ENCODE measurements at regions of chr2 and their contacts with region 1.

Region 1: GRCh38 chr2:218733171-218734021 is 22.8 kb downstream of the TTLL4 start:
- DNase-seq: peak; percentile 16
- H3K4me3 Mint-ChIP-seq: no peak overlapping the region
- H3K27ac Mint-ChIP-seq: peak overlapping the region; percentile 48
- H3K4me1 Mint-ChIP-seq: peaks cover 28% of the 10 kb centered on the region
- H3K27me3 Mint-ChIP-seq: no peaks in the 10 kb centered on the region

Region 2: DNA sequence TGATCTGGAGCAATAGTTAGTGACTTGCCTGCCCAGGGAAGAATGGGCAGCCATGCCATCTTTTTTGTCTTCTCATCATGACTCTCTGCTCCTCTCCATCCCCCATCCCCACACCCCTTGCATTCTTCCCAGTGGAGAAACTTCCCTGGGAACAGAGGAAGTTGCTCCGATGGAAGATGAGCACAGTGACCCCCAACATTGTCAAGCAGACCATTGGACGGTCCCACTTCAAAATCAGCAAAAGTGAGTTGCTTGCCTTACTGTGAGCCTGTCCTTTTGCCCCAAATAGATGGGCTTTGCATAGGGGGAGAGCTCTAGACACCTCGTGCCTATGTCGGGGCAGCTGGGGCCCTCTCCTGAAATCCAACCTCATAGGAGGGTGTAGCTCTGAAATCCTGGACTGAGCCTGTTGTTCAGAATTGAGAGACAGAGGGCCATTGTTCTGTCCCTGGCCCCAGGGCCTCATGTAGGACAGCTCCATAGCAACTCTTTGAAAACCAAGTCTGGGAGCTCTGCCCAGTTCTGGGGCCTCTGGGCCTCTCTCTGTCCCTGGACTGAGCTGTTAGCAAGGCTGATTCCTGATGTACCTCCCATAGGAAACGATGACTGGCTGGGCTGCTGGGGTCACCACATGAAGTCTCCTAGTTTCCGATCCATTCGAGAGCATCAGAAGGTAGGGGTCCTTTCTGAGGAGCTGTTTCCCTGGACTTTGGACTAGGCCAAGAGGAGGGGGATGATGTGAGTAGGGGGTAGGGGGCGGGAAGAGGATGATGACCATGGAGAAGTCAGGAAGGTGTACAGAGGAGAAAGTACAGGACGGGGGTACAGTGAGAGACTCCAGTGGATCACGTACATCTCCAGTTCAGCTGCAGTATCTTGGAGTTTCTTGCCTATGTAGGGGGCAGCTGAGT is 12.4 kb after region 1 on chr2:
- intact Hi-C with region 1: loop called (anchors 1 kb)
- DNase-seq: no peak
- H3K4me3 Mint-ChIP-seq: no peak overlapping the region
- H3K27ac Mint-ChIP-seq: no peak overlapping the region
- H3K4me1 Mint-ChIP-seq: peaks cover 24% of the 10 kb centered on the region
- H3K27me3 Mint-ChIP-seq: no peaks in the 10 kb centered on the region